ENCODE measurements at regions of chr18 and their contacts with region 1.

Region 1: DNA sequence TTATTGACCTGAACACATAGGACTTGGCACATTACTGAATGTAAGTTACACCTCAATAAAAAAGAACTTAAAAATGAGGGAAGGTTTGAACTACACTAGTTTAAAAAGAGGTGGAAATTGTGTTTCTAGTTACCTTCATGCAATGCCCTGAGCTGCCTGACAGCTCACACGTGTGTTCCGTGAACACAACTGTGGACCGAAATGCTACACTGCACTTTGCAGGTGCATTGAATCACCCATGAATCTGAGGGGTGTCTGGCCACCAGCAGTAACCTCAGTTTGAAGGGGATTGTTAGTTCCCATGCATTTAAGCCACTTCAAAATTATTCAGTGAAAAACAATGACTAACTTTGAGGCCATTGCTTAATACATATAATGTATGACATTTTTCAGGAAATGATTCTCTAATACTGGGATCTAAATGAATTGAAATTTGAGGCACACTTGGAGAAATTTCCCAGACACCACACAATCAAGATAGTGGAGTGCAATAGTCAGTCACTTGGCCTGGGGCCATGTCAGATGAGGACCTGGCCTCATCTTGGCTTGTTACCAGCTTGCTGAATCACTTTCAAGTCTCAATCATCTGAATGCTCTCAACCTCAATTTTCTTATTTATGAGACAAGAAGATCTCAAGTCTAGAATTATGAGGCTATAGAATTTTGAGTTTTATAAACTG is 59.3 kb downstream of the MYL12B start:
- DNase-seq: peak; percentile 94
- H3K4me3 ChIP-seq: no peak overlapping the region
- H3K27ac ChIP-seq: peak overlapping the region; percentile 49
- H3K4me1 ChIP-seq: peaks cover 33% of the 10 kb centered on the region
- H3K27me3 ChIP-seq: no peaks in the 10 kb centered on the region
- CTCF ChIP-seq: no peak
- POLR2A ChIP-seq: no peak

Region 2: DNA sequence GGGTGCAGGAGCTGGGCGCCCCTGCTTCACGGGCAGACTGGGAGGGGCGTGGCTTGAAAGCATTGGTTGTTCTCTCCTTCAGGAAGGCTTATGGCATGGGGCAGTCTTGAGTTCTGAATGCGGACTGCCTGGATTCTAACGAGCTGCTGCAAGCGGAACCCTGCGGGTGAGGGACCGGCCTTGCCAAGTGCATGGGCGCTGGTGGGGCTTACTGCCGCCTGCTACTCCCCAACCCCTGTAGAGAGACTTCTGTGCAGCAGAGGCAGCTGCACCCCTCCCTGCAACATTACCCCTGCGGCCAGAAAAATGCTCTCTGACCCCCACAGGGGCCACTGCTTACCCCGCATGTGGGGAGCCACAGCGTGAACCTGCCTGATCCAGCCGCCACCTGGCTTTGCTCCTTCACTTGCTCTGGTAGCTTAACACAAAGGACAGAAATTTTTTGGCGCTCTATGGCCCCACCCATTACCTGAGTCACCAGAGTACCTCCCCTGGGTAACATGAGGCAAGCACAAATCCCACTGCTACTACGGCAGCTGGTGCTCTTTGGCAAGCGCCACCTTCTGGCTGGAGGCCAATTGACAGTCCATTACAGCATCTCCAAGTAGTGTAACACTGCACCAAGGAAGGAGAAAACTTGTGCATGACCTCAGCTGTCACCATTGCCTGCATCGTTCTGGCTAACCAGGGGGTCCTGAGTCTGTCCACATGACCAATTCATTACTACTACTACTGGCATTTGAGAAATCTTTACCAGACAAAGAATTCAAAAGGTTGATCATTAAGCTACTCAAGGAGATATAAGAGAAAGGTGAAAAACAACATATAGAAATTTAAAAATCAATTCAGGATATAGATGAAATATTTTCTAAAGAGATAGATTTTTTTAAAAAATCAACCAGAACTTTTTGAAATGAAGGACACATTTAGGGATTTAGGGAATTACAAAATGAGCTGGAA is 24.0 kb before region 1 on chr18:
- CTCF ChIA-PET with region 1: interaction called, 13 read pairs
- POLR2A ChIA-PET with region 1: no interaction called
- dilution Hi-C with region 1: no loop called
- intact Hi-C with region 1: no loop called
- DNase-seq: peak; percentile 57
- H3K4me3 ChIP-seq: peak overlapping the region in 2 of 3 experiments; percentile 53 to 54
- H3K27ac ChIP-seq: no peak overlapping the region
- H3K4me1 ChIP-seq: no peaks in the 10 kb centered on the region
- H3K27me3 ChIP-seq: peaks cover 0 to 10% of the 10 kb centered on the region in 2 experiments
- CTCF ChIP-seq: peak; percentile 64 to 67
- POLR2A ChIP-seq: no peak

Region 3: DNA sequence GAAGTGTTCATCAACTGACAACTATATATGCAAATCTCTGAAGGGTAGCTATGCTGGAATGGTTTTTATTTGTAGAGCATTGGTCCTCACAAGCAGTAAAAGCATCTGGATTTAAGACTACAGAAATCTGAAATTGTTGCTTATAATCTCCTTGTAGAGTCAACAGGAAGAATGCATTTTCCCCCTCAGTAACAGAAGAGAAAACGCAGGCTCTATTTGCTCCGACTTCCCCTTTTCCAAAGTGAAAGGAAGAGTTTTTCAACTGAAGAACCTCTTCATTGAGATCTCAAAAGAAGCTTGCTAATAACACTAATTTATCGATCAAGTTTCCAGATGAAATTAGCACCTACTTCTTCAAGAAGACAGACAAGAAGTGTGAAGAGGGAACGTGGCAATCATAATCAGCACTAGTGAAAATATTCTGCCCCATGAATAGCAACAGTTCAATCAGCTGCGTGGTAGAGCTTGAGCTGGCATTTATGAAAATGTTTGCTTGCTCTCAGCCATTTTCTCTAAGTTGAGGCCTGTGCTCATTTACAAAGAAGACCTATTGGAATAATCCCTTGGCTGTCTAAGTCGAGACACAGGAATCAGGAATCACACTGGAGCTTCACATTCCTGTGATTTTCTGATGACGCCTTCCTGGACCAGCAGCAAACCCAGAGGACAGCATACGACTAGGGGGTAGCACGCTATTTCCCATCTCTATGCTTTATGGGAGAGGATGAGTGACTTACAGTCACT is 172.4 kb after region 1 on chr18:
- CTCF ChIA-PET with region 1: no interaction called
- POLR2A ChIA-PET with region 1: no interaction called
- dilution Hi-C with region 1: no loop called
- intact Hi-C with region 1: no loop called
- DNase-seq: no peak
- H3K4me3 ChIP-seq: no peak overlapping the region
- H3K27ac ChIP-seq: no peak overlapping the region
- H3K4me1 ChIP-seq: no peaks in the 10 kb centered on the region
- H3K27me3 ChIP-seq: peaks cover 0 to 2% of the 10 kb centered on the region in 2 experiments
- CTCF ChIP-seq: no peak
- POLR2A ChIP-seq: no peak

Measured in endothelial cell of umbilical vein (primary cell).